Activated B cell treated with CpG ODN at 0.5 μM for 24 hours (primary cell): ENCODE measurements at regions of chr16 and their contacts with region 1.

Region 1: DNA sequence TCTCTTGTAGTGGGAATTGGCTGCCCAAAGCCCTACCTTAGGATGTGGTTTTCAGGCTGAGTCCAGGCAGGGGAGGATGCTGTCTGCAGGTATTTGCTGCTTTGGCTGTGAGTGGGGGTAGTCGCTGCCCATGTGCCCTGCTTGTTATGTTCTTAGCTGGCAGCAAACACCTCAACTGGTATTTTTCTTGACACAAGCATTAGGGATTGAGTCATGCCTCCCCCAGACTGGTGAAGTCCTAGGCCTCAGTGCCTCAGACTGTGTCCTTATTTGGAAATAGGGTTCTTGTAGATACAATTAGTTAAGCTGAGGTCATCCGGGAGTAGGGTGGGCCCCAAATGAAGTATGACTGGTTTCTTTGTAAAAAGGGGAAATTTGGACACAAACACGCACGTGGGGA is 808.3 kb upstream of the EEF2KMT start:
- DNase-seq: no peak
- ATAC-seq: no peak
- H3K4me3 Mint-ChIP-seq: no peak overlapping the region
- H3K27ac Mint-ChIP-seq: no peak overlapping the region
- H3K4me1 Mint-ChIP-seq: no peaks in the 10 kb centered on the region
- H3K27me3 Mint-ChIP-seq: no peaks in the 10 kb centered on the region
- CTCF ChIP-seq: no peak

Region 2: GRCh38 chr16:5895137-5895536 is 10.8 kb before region 1 on chr16:
- CTCF ChIA-PET with region 1: no interaction called
- POLR2A ChIA-PET with region 1: interaction called, 13 read pairs
- intact Hi-C with region 1: no loop called
- DNase-seq: no peak
- ATAC-seq: no peak
- H3K4me3 Mint-ChIP-seq: no peak overlapping the region
- H3K27ac Mint-ChIP-seq: no peak overlapping the region
- H3K4me1 Mint-ChIP-seq: no peaks in the 10 kb centered on the region
- H3K27me3 Mint-ChIP-seq: no peaks in the 10 kb centered on the region
- CTCF ChIP-seq: no peak